Activated T-helper 1 cell treated with anti-CD3 and anti-CD28 coated beads, Interleukin-12 subunit alpha, Interleukin-12 subunit beta, Interleukin-2, Interleukin-4 antibody, amounts not matched to agents 30 ng/mL and 10 ng/mL and 1 ng/mL, durations not matched to agents 14 hours and 24 hours and 36 hours (primary cell): ENCODE measurements at regions of chr16 and their contacts with region 1.

Region 1: GRCh38 chr16:31382485-31383161 is 10.5 kb upstream of the ITGAD start:
- DNase-seq: peak; percentile 60
- H3K4me3 Mint-ChIP-seq: no peak overlapping the region
- H3K27ac Mint-ChIP-seq: no peak overlapping the region
- H3K4me1 Mint-ChIP-seq: peaks cover 31% of the 10 kb centered on the region
- H3K27me3 Mint-ChIP-seq: peaks cover 3% of the 10 kb centered on the region

Region 2: DNA sequence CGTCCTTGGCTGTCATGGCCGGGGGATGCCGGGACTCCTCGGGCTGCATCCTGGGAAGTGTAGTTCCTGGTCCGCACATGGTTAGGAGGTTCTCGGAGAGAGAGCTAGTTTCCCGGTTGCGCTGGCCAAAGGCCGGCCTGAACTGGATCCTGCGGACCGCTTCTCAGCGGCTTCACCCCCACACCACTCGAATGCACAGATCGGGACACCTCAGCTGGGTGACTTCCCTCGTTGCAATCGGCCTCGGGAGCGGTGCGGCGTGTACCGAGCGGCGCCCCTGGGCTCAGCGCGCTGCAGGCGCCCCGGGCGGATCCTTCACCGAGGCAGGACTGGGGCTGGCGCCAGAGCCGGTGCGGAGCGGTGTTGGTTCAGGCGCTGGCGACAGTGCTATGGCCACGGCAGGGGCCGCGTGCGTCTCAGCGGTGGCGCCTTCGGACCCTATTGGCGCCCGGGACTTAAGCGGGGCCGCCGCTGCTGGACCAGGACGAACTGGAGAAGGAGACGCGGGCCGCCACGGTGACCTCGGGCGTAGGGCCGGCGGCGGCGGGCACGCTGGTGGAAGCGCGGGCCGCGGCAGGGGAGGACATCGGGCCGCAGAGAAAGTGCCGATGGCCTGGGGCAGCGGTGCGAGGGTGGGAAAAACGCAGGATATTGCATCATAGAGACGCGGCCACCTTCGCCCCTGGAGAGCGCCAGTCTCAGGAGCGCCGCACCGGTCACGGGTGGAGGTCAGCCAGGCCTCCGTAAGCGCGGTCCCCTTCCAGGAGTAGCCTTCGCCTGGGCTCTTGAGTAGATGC is 607.0 kb before region 1 on chr16:
- intact Hi-C with region 1: no loop called
- DNase-seq: peak; percentile 56
- H3K4me3 Mint-ChIP-seq: peak overlapping the region; percentile 94
- H3K27ac Mint-ChIP-seq: peak overlapping the region; percentile 96
- H3K4me1 Mint-ChIP-seq: peaks cover 20% of the 10 kb centered on the region
- H3K27me3 Mint-ChIP-seq: no peaks in the 10 kb centered on the region

Region 3: DNA sequence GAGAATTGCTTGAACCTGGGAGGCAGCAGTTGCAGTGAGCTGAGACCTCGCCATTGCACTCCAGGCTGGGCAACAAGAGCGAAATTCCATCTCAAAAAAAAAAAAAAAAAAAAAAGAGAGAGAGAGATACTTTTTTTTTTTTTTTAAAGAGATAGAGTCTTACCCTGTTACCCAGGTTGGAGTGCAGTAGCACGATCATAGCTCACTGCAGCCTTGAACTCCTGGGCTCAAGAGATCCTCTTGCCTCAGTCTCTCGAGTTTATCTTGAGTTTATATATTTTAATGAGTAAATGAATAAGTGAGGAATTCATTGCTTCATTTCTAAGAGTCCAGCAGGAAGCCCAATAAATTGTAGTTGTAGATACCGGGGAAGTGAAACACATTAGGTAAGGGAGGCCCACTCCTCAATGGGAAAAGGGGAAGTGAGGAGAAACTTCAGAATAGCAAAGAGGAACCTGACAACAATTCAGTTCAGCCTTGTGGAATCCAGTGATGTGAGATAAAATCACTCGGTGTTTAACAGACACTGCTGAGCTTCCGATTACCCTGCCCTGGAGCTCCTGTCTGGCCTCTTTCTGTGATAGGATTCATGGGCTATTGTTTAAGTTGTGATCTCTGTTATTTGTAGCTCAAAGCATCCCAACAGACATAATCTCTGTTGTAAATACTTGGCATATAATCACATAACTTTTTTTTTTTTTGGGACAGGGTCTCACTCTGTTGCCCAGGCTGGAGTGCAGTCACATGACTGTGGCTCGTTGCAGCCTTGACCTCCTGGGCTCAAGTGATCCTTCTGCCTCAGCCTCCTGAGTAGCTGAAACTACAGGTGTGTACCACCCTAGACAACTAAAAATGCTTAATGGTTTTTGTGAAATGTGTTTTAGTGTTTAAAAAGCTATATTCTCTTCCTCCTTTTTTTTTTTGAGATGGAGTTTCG is 138.6 kb before region 1 on chr16:
- intact Hi-C with region 1: no loop called
- DNase-seq: no peak
- H3K4me3 Mint-ChIP-seq: no peak overlapping the region
- H3K27ac Mint-ChIP-seq: no peak overlapping the region
- H3K4me1 Mint-ChIP-seq: no peaks in the 10 kb centered on the region
- H3K27me3 Mint-ChIP-seq: no peaks in the 10 kb centered on the region

Region 4: DNA sequence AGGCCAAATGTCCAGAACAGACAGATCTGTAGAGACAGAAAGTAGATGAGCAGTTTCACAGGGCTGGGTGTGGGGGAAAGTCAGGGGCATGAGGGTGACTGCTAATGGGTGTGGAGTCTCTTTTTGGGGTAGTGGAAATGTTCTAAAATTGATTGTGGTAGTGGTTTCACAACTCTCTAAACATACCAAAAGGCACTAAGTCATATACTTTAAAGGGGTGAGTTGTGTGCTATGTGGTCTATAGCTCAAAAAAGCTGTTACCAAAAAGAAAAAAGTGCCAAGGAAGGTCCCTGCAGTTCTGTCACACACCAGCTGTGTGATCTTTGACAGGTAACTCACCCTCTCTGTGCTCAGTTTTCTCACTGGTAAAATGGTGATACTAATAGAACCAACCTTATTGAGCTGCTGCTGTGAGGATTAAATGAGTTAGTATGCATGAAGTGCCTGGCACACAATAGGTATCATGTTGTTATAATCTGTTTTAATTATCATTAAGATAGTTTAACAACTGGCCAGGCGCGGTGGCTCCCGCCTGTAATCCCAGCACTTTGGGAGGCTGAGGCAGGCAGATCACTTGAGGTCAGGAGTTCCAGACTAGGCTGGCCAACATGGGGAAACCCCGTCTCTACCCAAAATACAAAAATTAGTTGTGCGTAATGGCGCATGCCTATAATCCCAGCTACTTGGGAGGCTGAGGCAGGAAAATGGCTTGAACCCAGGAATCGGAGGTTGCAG is 17.3 kb before region 1 on chr16:
- intact Hi-C with region 1: loop called (anchors 1 kb)
- DNase-seq: no peak
- H3K4me3 Mint-ChIP-seq: no peak overlapping the region
- H3K27ac Mint-ChIP-seq: peak overlapping the region; percentile 70
- H3K4me1 Mint-ChIP-seq: peaks cover 47% of the 10 kb centered on the region
- H3K27me3 Mint-ChIP-seq: no peaks in the 10 kb centered on the region

Region 5: GRCh38 chr16:31400191-31400590 is 17.6 kb after region 1 on chr16:
- intact Hi-C with region 1: loop called (anchors 1 kb)
- DNase-seq: no peak
- H3K4me3 Mint-ChIP-seq: no peak overlapping the region
- H3K27ac Mint-ChIP-seq: no peak overlapping the region
- H3K4me1 Mint-ChIP-seq: peaks cover 17% of the 10 kb centered on the region
- H3K27me3 Mint-ChIP-seq: no peaks in the 10 kb centered on the region

Region 6: DNA sequence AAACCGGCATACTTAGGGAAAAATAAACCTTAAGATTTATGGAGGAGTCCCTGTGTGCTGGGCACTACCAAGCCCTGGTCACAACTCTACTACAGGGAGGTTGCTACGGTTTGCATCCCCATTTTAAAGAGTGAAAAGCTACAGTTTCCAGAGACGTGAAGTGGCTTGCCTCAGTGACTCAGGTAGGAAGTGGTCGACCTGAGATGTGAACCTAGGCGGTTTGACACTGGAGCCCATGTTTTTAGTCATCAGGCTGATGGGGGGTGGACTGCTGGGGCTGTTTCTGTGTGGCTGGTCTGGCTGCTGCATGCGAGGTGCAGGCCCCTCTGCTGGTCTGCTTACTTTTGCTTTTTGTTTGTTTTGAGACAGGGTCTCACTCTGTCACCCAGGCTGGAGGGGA is 39.0 kb after region 1 on chr16:
- intact Hi-C with region 1: loop called (anchors 1 kb)
- DNase-seq: peak; percentile 69
- H3K4me3 Mint-ChIP-seq: peak overlapping the region; percentile 44
- H3K27ac Mint-ChIP-seq: peak overlapping the region; percentile 77
- H3K4me1 Mint-ChIP-seq: peaks cover 62% of the 10 kb centered on the region
- H3K27me3 Mint-ChIP-seq: peaks cover 2% of the 10 kb centered on the region